T-cell (primary cell): ENCODE measurements at regions of chr13 and their contacts with region 1.

Region 1: GRCh38 chr13:44694291-44694690 is 118.2 kb upstream of the TSC22D1 start:
- DNase-seq: no peak
- ATAC-seq: no peak
- H3K4me3 ChIP-seq: no peak overlapping the region
- H3K4me3 Mint-ChIP-seq: no peak overlapping the region
- H3K27ac ChIP-seq: no peak overlapping the region
- H3K27ac Mint-ChIP-seq: no peak overlapping the region
- H3K4me1 ChIP-seq: no peaks in the 10 kb centered on the region
- H3K4me1 Mint-ChIP-seq: no peaks in the 10 kb centered on the region
- H3K27me3 ChIP-seq: no peaks in the 10 kb centered on the region
- H3K27me3 Mint-ChIP-seq: peaks cover 10% of the 10 kb centered on the region in 2 donors

Region 2: DNA sequence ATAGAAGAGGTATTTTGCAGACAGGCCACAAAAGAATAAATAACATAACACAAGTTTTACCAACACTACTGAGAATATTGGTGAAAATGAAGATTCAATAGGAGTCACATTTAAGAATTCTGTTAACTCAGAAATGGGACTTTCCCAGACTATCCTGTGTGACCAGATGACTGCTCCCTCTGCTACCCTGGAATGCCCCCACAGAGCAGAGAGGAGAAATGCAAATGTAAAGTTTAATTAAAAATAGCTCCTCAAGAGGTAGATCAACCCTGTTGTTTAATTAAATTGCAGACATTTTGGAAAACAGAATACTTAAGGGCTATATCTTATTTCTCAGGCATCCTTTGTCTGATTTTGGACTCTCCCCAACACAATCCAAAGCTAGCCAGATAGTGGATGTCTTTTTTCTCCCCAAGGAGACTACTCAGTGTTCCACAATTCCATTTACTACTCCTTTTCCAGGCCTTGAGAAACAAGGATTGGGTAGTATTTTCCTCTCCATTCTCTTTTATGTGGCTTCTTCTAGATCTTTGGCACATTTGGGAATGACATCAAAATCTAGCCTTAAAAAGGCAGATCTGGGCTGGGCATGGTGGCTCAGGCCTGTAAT is 13.4 kb before region 1 on chr13:
- CTCF ChIA-PET with region 1: no interaction called
- POLR2A ChIA-PET with region 1: no interaction called
- DNase-seq: no peak
- ATAC-seq: no peak
- H3K4me3 ChIP-seq: no peak overlapping the region
- H3K4me3 Mint-ChIP-seq: no peak overlapping the region
- H3K27ac ChIP-seq: no peak overlapping the region
- H3K27ac Mint-ChIP-seq: no peak overlapping the region
- H3K4me1 ChIP-seq: no peaks in the 10 kb centered on the region
- H3K4me1 Mint-ChIP-seq: peaks cover 4 to 5% (median 4%) of the 10 kb centered on the region in 3 donors
- H3K27me3 ChIP-seq: no peaks in the 10 kb centered on the region
- H3K27me3 Mint-ChIP-seq: no peaks in the 10 kb centered on the region

Region 3: GRCh38 chr13:44710576-44710975 is 16.3 kb after region 1 on chr13:
- CTCF ChIA-PET with region 1: interaction called in 1 of 2 experiments, 10 read pairs
- POLR2A ChIA-PET with region 1: no interaction called
- DNase-seq: no peak
- ATAC-seq: no peak
- H3K4me3 ChIP-seq: no peak overlapping the region
- H3K4me3 Mint-ChIP-seq: no peak overlapping the region
- H3K27ac ChIP-seq: no peak overlapping the region
- H3K27ac Mint-ChIP-seq: no peak overlapping the region
- H3K4me1 ChIP-seq: no peaks in the 10 kb centered on the region
- H3K4me1 Mint-ChIP-seq: no peaks in the 10 kb centered on the region
- H3K27me3 ChIP-seq: peaks cover 0 to 3% of the 10 kb centered on the region in 2 experiments
- H3K27me3 Mint-ChIP-seq: peaks cover 0 to 3% of the 10 kb centered on the region in 2 donors